ENCODE measurements at regions of chr7 and their contacts with region 1.

Region 1: GRCh38 chr7:98878365-98879165 is at the start of gene TRRAP:
- DNase-seq: peak; percentile 78
- H3K4me3 Mint-ChIP-seq: peak within 1 kb of the TSS; percentile 88
- H3K27ac Mint-ChIP-seq: peak within 1 kb of the TSS; percentile 94
- H3K4me1 Mint-ChIP-seq: peaks cover 30% of the 10 kb centered on the region
- H3K27me3 Mint-ChIP-seq: no peaks in the 10 kb centered on the region
- total RNA-seq, gene TRRAP: 33.5 to 37.4 TPM

Region 2: DNA sequence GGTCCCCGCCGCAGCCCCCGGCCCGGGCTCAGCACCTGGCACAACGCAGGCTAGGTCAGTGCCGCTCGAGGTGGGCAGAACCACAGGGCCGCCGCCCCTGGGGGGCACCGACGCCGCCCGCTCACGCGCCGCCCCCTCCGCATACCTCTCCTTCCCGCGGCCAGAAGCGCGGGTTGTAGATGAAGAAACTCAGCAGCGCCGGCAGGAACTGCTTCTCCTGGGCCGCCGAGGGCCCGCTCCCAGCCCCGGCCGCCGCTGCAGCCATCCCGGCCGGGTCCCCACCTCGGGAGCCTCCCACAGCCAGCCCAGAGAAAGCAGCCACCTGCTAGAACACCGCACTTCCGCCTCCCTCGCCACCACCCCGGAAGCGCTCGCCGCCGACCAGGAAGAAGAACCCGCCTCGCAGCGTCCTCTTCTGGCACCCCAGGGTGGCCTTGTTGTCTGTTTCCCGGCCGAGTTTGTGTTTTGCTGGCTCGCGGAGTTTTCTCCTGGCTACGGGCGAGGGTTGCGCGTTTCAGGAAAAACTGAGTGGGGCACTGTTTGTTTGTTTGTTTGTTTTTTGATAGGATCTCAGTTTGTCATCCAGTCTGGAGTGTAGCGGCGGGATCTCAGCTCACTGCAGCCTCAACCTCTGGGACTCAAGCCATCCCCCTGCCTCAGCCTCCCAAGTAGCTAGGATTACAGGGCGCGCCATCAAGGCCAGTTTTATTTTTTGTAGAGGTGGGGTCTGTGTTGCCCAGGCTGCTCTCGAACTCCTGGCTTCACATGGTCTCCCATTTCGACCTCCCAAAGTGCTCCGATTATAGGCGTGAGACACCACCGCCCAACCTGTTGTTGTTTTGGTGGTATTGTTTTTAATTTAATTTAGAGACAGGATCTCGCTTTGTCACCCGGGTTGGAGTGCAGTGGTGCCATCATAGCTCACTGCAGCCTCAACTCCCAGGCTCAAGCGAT is 906.3 kb before region 1 on chr7:
- CTCF ChIA-PET with region 1: no interaction called
- intact Hi-C with region 1: loop called (anchors 5 kb)
- DNase-seq: peak; percentile 91
- H3K4me3 Mint-ChIP-seq: peak overlapping the region; percentile 94
- H3K27ac Mint-ChIP-seq: peak overlapping the region; percentile 95
- H3K4me1 Mint-ChIP-seq: peaks cover 27% of the 10 kb centered on the region
- H3K27me3 Mint-ChIP-seq: no peaks in the 10 kb centered on the region

Region 3: GRCh38 chr7:98251841-98252639 is 626.5 kb before region 1 on chr7 and contains the start of gene TECPR1:
- CTCF ChIA-PET with region 1: no interaction called
- intact Hi-C with region 1: loop called (anchors 1 kb)
- DNase-seq: peak; percentile 90
- H3K4me3 Mint-ChIP-seq: peak within 1 kb of the TSS; percentile 93
- H3K27ac Mint-ChIP-seq: peak within 1 kb of the TSS; percentile 94
- H3K4me1 Mint-ChIP-seq: peaks cover 53% of the 10 kb centered on the region
- H3K27me3 Mint-ChIP-seq: no peaks in the 10 kb centered on the region
- total RNA-seq, gene TECPR1: 29.8 to 36.7 TPM

Region 4: DNA sequence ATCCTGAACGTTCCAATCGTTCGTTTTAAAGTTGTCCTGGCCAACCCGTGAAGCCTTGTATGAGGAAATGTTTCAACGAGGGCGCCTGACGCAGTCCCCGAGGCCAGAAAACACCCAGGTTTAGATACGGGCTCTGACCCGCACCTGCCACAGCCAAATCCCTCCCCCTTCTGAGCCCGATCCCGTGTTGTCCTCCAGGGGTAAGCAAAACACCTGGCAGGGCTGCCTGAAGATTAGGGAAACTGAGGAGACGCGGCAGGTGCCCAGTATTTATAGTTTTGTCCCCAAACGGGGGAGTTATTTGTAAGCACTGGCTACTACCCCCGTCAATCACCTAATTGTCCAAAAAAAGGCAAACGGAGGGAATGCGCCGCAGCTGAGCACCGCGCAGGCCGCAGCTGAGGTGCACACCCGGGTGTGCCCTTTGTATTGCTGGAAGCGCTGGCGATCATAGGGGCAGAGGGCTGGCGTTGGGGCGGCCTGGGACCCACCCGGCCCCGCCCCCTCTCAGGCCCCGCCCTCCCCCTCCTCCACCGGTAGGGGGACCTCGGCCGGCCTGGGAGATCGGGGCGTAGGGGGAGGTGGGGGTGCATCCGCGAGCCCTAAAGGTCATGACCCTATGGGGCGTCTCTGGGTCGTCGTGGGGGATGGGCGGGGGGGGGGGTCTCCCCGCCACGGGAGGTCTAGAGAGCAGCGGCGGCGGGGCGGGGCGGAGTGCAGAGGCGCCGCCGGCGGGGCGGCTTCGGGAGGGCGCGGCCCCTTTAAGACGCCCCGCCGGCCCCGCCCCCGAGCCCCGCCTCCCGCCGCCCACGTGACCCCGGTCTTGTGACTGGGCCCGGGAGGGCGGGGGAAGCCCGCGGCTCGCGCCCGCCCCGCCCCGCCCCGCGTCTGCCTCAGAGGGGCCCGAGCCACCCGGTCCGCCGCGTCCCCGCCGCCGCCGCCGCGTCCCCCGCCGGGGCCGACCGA is 597.5 kb before region 1 on chr7 and contains the start of gene BRI3:
- CTCF ChIA-PET with region 1: no interaction called
- intact Hi-C with region 1: loop called (anchors 1 kb)
- DNase-seq: peak; percentile 91
- H3K4me3 Mint-ChIP-seq: peak within 1 kb of the TSS; percentile 77
- H3K27ac Mint-ChIP-seq: peak within 1 kb of the TSS; percentile 41
- H3K4me1 Mint-ChIP-seq: peaks cover 29% of the 10 kb centered on the region
- H3K27me3 Mint-ChIP-seq: no peaks in the 10 kb centered on the region
- total RNA-seq, gene BRI3: 51.6 to 54.4 TPM

Region 5: DNA sequence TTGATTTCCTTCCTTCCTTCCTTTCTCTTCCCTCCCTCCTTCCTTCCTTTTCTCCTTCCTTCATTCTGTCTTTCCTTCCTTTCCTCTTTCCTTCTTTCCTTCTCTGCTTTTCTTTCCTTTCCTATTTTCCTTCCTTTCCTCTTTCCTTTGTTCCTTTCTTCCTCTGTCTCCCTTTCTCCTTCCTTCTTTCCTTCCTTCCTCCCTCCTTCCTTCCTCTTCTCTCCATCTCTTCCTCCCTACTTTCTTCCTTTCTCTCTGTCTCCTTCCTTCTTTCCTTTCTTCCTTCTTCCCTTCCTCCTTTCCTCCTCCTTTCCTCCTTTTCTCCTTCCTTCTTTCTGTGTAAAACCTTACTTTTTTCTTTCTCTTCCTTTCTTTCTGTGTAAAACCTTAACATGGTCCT is 293.7 kb before region 1 on chr7:
- CTCF ChIA-PET with region 1: no interaction called
- intact Hi-C with region 1: no loop called
- DNase-seq: no peak
- H3K4me3 Mint-ChIP-seq: no peak overlapping the region
- H3K27ac Mint-ChIP-seq: no peak overlapping the region
- H3K4me1 Mint-ChIP-seq: no peaks in the 10 kb centered on the region
- H3K27me3 Mint-ChIP-seq: peaks cover 2% of the 10 kb centered on the region

Region 6: GRCh38 chr7:99325545-99326407 is 447.2 kb after region 1 on chr7 and contains the start of gene ARPC1A:
- CTCF ChIA-PET with region 1: no interaction called
- intact Hi-C with region 1: loop called (anchors 2 kb)
- DNase-seq: peak; percentile 90
- H3K4me3 Mint-ChIP-seq: peak within 1 kb of the TSS; percentile 80
- H3K27ac Mint-ChIP-seq: peak within 1 kb of the TSS; percentile 88
- H3K4me1 Mint-ChIP-seq: peaks cover 41% of the 10 kb centered on the region
- H3K27me3 Mint-ChIP-seq: no peaks in the 10 kb centered on the region
- total RNA-seq, gene ARPC1A: 41.5 to 47.7 TPM

Region 7: DNA sequence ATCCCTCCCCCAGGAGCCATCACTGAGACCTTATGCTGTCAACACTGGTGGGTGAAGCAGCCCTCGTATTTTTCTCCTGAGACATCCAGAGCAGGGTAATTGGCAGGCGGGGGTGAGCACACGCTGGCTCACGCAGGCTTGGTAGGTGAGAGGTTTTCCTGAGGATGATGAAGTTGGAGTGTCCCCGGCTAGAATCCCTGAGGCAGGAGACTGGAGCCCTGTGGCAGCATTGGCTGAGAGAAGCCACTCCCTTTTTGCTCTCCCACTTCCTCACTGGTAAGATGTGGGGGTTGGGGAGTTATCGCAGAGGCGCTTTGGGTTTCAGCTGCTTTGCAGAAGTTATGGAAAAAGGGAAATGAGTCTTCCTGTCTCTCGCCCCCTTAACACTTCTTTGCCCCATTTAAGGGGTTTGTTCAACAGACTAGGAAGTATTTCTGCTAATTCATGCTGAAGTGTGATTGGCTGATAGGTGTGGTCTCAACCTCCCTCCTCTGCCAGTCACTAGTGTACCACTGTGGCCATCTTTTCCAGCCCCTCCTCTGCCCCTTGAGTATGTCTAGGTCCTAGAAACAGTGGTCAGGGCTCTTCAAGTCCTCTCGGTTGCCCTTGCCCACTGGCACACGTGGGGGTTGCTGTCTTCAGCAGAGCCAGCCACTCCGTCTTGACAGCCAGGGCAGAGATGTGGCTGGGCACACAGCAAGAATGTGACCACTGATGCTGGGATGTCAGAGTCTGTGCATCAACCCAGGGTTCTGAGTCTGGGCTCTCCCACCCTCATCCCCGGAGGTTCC is 501.7 kb after region 1 on chr7:
- CTCF ChIA-PET with region 1: no interaction called
- intact Hi-C with region 1: loop called (anchors 2 kb)
- DNase-seq: peak; percentile 69
- H3K4me3 Mint-ChIP-seq: peak overlapping the region; percentile 81
- H3K27ac Mint-ChIP-seq: peak overlapping the region; percentile 97
- H3K4me1 Mint-ChIP-seq: peaks cover 61% of the 10 kb centered on the region
- H3K27me3 Mint-ChIP-seq: no peaks in the 10 kb centered on the region